Activated CD4-positive, alpha-beta T cell treated with anti-CD3 and anti-CD28 coated beads, Interleukin-2, amount 10 ng/mL, durations not matched to agents 7 days and 5 days (primary cell): ENCODE measurements at regions of chr11 and their contacts with region 1.

Region 1: GRCh38 chr11:75450826-75451821 is 18.1 kb upstream of the KLHL35 start:
- DNase-seq: peak; percentile 41
- H3K4me3 Mint-ChIP-seq: no peak overlapping the region
- H3K27ac Mint-ChIP-seq: no peak overlapping the region
- H3K4me1 Mint-ChIP-seq: no peaks in the 10 kb centered on the region
- H3K27me3 Mint-ChIP-seq: no peaks in the 10 kb centered on the region

Region 2: DNA sequence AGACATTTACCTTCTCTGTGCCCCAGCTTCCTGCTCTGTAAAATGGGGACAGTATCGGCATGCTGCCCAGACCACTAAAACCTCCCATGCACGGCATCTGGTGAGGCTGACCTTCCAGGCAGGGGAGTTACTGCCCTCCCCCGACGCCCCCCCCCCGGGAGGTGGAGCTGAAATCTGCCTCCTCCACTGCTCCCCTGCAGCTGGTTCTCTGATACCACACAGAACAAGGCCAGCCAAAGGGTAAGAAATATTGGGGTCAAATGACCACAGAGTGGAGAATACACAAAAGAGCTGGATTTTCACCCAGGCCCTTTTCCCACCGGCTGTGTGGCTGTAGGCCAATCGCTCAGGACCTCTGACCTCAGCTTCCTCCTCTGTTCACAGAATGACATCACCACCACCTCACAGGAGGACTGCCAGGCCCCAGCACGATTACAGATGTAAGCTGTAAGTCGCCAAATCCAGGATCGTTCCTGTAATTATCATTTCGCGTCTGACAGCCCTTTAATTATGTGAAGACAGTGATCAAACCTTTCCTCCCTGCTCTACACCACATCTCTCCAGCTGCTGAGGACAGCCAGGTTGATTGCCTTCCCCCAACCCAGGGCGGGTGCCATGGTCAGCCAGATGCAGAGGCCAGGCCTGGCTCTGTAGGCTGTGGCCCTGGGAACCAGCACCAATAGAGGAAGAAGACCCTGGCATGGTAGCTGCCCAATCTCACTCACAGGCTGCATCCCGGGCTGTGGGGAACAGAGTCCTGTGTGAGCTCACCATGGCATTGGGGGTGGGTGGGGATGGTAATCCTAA is 17.6 kb after region 1 on chr11:
- CTCF ChIA-PET with region 1: interaction called, 11 read pairs
- POLR2A ChIA-PET with region 1: no interaction called
- DNase-seq: no peak
- H3K4me3 Mint-ChIP-seq: no peak overlapping the region
- H3K27ac Mint-ChIP-seq: no peak overlapping the region
- H3K4me1 Mint-ChIP-seq: no peaks in the 10 kb centered on the region
- H3K27me3 Mint-ChIP-seq: no peaks in the 10 kb centered on the region

Region 3: GRCh38 chr11:75523189-75523588 is 72.1 kb after region 1 on chr11:
- CTCF ChIA-PET with region 1: interaction called, 11 read pairs
- POLR2A ChIA-PET with region 1: no interaction called
- DNase-seq: no peak
- H3K4me3 Mint-ChIP-seq: peak overlapping the region; percentile 82
- H3K27ac Mint-ChIP-seq: peak overlapping the region; percentile 25
- H3K4me1 Mint-ChIP-seq: peaks cover 40% of the 10 kb centered on the region
- H3K27me3 Mint-ChIP-seq: peaks cover 2% of the 10 kb centered on the region